Activated naive CD4-positive, alpha-beta T cell treated with anti-CD3 and anti-CD28 coated beads for 36 hours (primary cell): ENCODE measurements at regions of chr1 and their contacts with region 1.

Region 1: GRCh38 chr1:25430666-25431505 is at the start of gene MACO1:
- DNase-seq: peak; percentile 98
- H3K4me3 Mint-ChIP-seq: peak within 1 kb of the TSS; percentile 95
- H3K27ac Mint-ChIP-seq: peak within 1 kb of the TSS; percentile 93
- H3K4me1 Mint-ChIP-seq: peaks cover 44% of the 10 kb centered on the region
- H3K27me3 Mint-ChIP-seq: no peaks in the 10 kb centered on the region
- total RNA-seq, gene MACO1: 8.4 to 8.6 TPM

Region 2: GRCh38 chr1:25232027-25232865 is 198.6 kb before region 1 on chr1 and contains the start of gene SYF2:
- CTCF ChIA-PET with region 1: no interaction called
- intact Hi-C with region 1: loop called (anchors 1 kb)
- DNase-seq: peak; percentile 92
- H3K4me3 Mint-ChIP-seq: no peak within 1 kb of the TSS
- H3K27ac Mint-ChIP-seq: no peak within 1 kb of the TSS
- H3K4me1 Mint-ChIP-seq: peaks cover 34% of the 10 kb centered on the region
- H3K27me3 Mint-ChIP-seq: no peaks in the 10 kb centered on the region
- total RNA-seq, gene SYF2: 39.7 to 46.8 TPM

Region 3: DNA sequence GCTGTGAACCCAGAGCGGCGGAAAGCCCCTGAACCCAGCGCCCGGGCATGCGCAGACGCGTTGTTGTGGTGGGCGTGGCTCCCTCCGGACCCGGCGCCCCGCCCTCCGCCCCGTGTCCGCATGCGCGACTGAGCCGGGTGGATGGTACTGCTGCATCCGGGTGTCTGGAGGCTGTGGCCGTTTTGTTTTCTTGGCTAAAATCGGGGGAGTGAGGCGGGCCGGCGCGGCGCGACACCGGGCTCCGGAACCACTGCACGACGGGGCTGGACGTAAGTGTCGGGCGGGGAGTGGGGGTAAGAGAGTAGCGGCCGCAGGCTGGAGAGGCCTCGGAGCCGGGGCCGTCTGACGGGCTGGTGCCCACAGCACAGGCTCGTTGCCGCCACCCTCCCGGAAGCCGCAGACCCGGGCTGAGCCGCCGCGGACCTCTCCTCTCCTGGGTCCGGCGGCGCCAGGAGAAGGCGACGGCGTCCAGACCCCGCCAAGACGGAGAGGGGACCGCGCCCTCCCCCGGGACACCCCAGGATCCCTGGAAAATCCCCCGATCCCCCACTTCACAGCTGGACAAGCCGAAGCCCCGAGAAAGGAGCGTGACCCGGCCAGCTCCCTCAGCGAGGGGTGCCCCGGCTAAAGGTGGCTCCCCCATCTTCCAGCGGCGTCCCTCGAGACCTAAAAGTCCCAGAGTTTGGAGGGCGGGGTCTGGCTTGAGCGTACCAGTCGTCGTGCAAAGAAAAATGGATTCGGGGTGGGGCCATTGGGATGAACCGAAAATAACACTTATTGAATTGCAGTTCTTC is 92.5 kb before region 1 on chr1 and contains the start of gene TMEM50A:
- CTCF ChIA-PET with region 1: no interaction called
- intact Hi-C with region 1: loop called (anchors 2 kb)
- DNase-seq: peak; percentile 91
- H3K4me3 Mint-ChIP-seq: peak within 1 kb of the TSS; percentile 93
- H3K27ac Mint-ChIP-seq: peak within 1 kb of the TSS; percentile 93
- H3K4me1 Mint-ChIP-seq: peaks cover 28% of the 10 kb centered on the region
- H3K27me3 Mint-ChIP-seq: no peaks in the 10 kb centered on the region
- total RNA-seq, gene TMEM50A: 96.2 to 98.3 TPM

Region 4: DNA sequence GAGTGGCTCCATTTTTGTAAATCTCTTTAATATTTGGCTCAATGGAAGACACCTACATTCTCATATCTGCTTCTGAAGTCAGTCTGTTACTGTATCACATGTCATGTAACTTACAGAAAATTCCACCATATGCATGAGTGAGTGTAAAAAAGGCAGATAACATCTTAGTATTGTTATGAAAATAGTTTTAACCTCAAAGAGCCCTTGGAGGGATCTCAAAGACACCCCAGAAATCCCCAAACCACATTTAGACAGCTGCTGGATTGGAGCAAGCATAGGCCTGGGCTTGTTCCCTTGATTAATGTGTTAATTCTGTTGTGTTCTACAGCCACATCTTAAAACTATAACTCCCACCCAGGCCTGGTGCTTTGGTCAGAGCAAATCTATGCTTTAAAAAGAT is 16.7 kb after region 1 on chr1:
- CTCF ChIA-PET with region 1: interaction called, 3 read pairs
- intact Hi-C with region 1: loop called (anchors 2 kb)
- DNase-seq: peak; percentile 50
- H3K4me3 Mint-ChIP-seq: no peak overlapping the region
- H3K27ac Mint-ChIP-seq: peak overlapping the region; percentile 77
- H3K4me1 Mint-ChIP-seq: peaks cover 34% of the 10 kb centered on the region
- H3K27me3 Mint-ChIP-seq: no peaks in the 10 kb centered on the region

Region 5: GRCh38 chr1:25476186-25477097 is 45.6 kb after region 1 on chr1:
- CTCF ChIA-PET with region 1: interaction called, 4 read pairs
- intact Hi-C with region 1: loop called (anchors 1 kb)
- DNase-seq: no peak
- H3K4me3 Mint-ChIP-seq: no peak overlapping the region
- H3K27ac Mint-ChIP-seq: peak overlapping the region; percentile 54
- H3K4me1 Mint-ChIP-seq: peaks cover 57% of the 10 kb centered on the region
- H3K27me3 Mint-ChIP-seq: no peaks in the 10 kb centered on the region

Region 6: GRCh38 chr1:25819576-25820246 is 388.8 kb after region 1 on chr1 and contains the start of gene MTFR1L:
- CTCF ChIA-PET with region 1: no interaction called
- intact Hi-C with region 1: loop called (anchors 5 kb)
- DNase-seq: peak; percentile 94
- H3K4me3 Mint-ChIP-seq: peak within 1 kb of the TSS; percentile 86
- H3K27ac Mint-ChIP-seq: peak within 1 kb of the TSS; percentile 88
- H3K4me1 Mint-ChIP-seq: peaks cover 36% of the 10 kb centered on the region
- H3K27me3 Mint-ChIP-seq: no peaks in the 10 kb centered on the region
- total RNA-seq, gene MTFR1L: 22.2 to 23.5 TPM